Heart left ventricle (tissue), 16 donors: ENCODE measurements at regions of chr4 and their contacts with region 1.

Region 1: DNA sequence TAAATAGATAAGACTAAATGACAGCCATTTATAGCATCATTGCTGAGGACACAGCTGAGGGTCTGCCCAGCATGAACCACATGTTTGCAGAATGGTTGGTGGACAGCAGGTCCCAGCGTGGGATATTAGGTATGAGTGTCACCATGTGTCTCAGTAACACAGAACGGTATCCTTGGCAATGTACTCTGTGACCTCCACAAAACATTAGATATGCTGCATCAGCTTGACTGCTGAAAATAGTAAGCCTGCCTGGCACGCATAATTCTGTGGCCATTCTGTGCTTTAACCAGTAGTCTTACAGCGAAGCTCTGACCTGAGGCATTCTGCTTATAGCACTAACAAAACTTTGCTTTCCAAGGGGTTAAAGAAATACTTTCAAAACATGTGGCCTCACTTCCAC is 32.0 kb downstream of the LIMCH1 start:
- DNase-seq: peak in 4 of 5 donors; percentile 57 to 70 (median 60)
- ATAC-seq: peak; percentile 90 to 97 (median 95)
- H3K4me3 ChIP-seq: no peak overlapping the region
- H3K27ac ChIP-seq: peak overlapping the region; percentile 59 to 92 (median 80)
- H3K4me1 ChIP-seq: peaks cover 4 to 88% (median 53%) of the 10 kb centered on the region in 12 donors
- H3K27me3 ChIP-seq: no peaks in the 10 kb centered on the region
- CTCF ChIP-seq: peak in 1 of 12 donors; percentile 17
- POLR2A ChIP-seq: peak in 1 of 2 donors; percentile 27

Region 2: GRCh38 chr4:41611881-41612871 is 42.2 kb after region 1 on chr4:
- intact Hi-C with region 1: loop called in 1 of 10 experiments (anchors 5 kb)
- DNase-seq: peak; percentile 68 to 79 (median 73)
- ATAC-seq: peak; percentile 89 to 93 (median 92)
- H3K4me3 ChIP-seq: peak overlapping the region in 7 of 12 donors; percentile 21 to 52 (median 29)
- H3K27ac ChIP-seq: peak overlapping the region; percentile 7 to 83 (median 68)
- H3K4me1 ChIP-seq: peaks cover 0 to 43% (median 32%) of the 10 kb centered on the region in 12 donors
- H3K27me3 ChIP-seq: no peaks in the 10 kb centered on the region
- CTCF ChIP-seq: peak in 2 of 12 donors; percentile 15 to 22
- POLR2A ChIP-seq: no peak